ENCODE measurements at regions of chr11 and their contacts with region 1.

Region 1: GRCh38 chr11:82718307-82718706 is 15.4 kb downstream of the FAM181B start:
- DNase-seq: no peak

Region 2: GRCh38 chr11:82577246-82577645 is 141.1 kb before region 1 on chr11:
- intact Hi-C with region 1: no loop called
- DNase-seq: no peak

Region 3: DNA sequence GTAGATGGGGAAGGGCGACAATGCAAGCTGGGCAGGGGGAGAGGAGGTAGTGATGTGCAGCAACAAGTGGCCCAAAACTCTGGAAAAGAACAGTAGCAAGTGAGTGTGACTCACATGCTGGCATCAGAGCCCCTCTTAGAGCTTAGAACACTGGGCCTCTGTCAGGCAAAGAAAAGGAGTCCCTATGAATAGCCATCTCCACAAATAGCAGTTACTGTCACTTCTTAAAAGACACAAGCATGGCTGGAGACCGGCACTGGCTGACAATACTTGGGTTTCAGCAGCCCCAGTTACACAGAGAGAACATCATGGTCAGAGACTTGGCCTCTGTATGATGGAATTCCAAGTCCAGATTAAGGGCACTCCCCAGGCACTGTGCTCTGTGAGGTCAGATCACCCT is 123.7 kb after region 1 on chr11:
- intact Hi-C with region 1: no loop called
- DNase-seq: no peak

Region 4: DNA sequence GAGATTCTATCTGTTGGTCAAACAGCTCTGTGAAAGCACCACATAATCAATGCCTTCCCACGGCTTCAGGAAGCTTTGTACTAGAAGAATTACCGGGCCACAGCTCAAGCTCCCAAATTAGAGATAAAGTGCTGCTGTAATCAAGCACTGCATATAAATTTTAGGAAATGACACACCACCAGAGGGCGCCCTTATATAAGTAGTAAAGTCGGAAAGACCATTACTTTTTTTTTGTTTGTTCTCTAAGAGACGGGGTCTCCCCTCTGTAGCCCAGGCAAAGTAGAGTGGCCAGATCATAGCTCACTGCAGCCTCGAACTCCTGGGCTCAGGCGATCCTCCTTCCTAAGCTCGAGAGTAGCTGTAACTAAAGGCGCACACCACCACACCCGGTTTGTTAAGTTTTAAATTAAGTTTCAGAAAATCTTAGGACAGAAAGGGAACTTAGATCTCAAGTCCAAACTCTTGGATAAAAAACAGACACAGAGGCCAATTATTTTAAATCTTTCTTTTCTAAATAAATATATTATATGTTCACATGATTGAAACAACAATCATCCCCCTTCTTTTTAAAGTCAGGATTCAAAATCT is 149.3 kb after region 1 on chr11:
- intact Hi-C with region 1: loop called (anchors 5 kb)
- DNase-seq: no peak

Region 5: DNA sequence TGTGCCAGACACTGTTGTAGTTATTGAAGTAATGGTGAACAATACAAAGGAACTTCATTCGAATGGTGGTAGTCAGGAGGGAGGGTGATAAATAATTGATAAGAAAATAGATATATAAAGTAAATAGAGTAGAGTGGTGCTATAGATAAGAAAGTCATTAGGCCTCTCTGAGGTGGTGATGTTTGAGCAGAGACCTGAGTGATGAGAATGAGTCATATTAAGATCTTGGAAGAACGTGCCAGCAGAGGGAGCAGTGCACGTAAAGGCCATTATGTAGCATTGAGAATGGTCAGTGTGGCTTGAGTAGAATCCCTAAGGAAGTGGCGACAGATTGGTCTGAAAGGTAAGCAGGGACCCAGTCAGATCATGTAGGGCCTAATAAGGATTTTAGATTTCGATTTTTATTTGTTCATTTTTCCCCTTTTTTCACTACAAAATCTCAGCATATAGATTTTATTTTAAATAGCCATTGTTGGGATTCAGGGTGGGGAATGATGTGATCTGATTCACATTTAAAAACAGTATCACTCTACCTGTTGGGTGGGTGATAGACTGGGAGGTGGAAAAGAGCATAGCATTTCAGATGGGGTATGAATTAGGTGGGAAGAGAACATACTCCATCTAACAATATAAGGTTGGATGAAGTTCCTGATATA is 523.1 kb after region 1 on chr11:
- intact Hi-C with region 1: loop called (anchors 10 kb)
- DNase-seq: no peak

Measured in cardiac septum (tissue), 1 donor.